ENCODE measurements at regions of chr1 and their contacts with region 1.

Region 1: DNA sequence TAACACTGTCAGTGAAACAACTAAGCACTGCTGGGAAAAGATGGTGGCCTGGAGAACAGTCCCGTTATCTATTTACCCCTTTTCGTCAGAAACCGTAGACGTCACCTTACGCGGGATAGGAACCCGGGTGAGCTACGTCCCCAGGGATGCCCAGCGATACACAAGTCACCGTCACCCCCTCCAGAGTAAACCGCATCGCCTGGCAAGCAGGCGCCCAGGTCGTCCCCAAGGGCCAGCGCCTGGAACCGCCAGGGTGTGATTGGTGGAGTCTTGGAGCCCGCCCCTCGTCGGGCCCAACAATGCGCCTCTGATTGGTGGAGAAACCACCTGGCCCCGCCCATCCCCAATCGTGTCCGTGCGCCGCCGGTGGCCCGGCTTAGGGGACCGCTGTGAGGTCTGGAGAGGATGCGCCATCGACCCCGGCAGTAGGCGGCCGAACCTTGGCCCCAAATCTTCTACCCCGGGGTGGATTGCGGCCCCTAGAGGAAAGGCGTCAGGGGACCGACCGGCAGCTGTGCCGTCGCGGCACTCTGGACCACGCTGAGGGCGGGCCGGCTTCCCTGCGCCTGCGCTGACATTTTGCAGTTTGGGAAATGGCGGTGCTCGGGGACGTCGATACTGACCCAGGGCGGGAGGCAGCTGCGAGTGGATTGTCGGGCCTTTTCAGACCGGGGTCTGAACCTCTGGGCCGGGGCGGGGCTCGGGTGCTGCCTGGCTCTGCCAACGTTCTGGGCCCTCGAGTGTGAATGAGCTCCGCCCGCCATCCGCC is 34.4 kb downstream of the SLC2A1 start:
- DNase-seq: peak; percentile 87 to 94 (median 92)
- H3K4me3 ChIP-seq: peak overlapping the region; percentile 96
- H3K4me3 Mint-ChIP-seq: peak overlapping the region; percentile 83 to 95 (median 89)
- H3K27ac ChIP-seq: peak overlapping the region; percentile 81
- H3K27ac Mint-ChIP-seq: peak overlapping the region; percentile 79 to 98 (median 94)
- H3K4me1 ChIP-seq: peaks cover 22% of the 10 kb centered on the region
- H3K4me1 Mint-ChIP-seq: peaks cover 34 to 39% (median 36%) of the 10 kb centered on the region in 3 donors
- H3K27me3 ChIP-seq: no peaks in the 10 kb centered on the region
- H3K27me3 Mint-ChIP-seq: no peaks in the 10 kb centered on the region

Region 2: DNA sequence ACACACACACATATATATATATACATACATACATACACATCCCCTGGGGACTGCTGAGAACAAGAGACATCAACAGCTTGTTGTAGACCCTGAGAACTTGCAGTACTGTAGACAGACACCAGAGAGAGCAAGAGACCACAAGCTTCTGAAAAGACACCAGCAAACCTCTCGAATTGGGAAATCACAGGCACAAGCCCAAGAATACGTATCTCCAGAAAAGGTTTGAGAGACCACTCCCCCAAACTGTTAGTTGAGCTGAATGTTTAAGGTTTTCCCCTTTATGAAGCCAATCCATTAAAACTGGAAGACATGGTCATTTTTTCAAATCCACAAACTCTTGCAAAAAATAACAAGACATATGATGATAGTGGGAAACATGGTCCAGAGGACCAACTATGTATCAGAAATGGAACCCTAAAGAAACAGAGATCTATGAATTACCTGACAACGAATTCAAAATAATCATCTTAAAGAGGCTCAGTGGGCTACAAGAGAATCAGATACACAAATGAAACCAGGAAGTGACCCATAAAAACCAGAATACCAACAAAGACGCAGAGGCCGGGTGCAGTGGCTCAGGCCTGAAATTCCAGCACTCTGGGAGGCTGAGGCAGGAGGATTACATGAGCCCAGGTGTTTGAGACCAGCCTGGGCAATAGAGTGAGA is 10.7 kb before region 1 on chr1:
- CTCF ChIA-PET with region 1: interaction called, 34 read pairs
- POLR2A ChIA-PET with region 1: interaction called, 3 read pairs
- DNase-seq: peak in 4 of 5 donors; percentile 61 to 71 (median 68)
- H3K4me3 ChIP-seq: no peak overlapping the region
- H3K4me3 Mint-ChIP-seq: no peak overlapping the region
- H3K27ac ChIP-seq: no peak overlapping the region
- H3K27ac Mint-ChIP-seq: no peak overlapping the region
- H3K4me1 ChIP-seq: no peaks in the 10 kb centered on the region
- H3K4me1 Mint-ChIP-seq: peaks cover 0 to 4% (median 3%) of the 10 kb centered on the region in 3 donors
- H3K27me3 ChIP-seq: no peaks in the 10 kb centered on the region
- H3K27me3 Mint-ChIP-seq: peaks cover 7 to 15% of the 10 kb centered on the region in 2 donors

Region 3: DNA sequence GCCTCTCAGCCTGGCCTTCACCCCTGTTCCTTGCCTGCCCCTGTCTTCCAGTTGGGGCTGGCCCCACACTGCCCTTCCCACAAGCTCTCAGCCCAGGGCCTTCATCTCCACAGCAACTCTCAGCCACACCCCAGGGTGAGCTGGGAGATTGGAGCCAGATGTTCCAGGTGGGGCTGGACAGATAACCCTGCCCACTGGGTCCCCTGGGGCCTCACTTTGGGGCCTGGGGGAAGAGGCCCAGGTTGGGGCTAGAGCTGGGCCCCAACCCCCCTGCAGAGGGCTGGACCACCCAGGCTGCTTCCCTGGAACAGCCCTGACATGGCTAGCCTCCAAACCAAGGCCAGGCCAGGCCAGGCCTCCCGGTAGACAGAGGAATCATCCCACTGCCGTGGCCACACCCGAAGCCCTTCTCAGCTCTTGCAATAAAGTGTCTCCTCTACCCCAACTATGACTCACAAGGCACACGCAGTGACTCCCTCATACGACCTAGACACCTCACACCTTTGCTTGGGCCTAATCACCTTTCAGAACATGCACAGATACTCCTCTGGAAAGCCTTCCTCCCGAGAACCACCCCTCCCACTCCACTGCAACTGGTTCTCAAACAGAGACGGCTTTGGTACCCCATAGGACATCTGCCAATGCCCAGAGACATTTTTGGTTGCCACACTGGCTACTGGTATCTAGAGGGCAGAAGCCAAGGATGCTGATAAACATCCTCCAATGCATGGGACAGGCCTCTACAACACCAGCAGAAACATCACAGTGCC is 12.2 kb after region 1 on chr1:
- CTCF ChIA-PET with region 1: interaction called, 26 read pairs
- POLR2A ChIA-PET with region 1: interaction called, 7 read pairs
- DNase-seq: peak in 4 of 5 donors; percentile 38 to 73 (median 48)
- H3K4me3 ChIP-seq: no peak overlapping the region
- H3K4me3 Mint-ChIP-seq: peak overlapping the region; percentile 34 to 65 (median 52)
- H3K27ac ChIP-seq: peak overlapping the region; percentile 62
- H3K27ac Mint-ChIP-seq: peak overlapping the region; percentile 81 to 96 (median 92)
- H3K4me1 ChIP-seq: peaks cover 96% of the 10 kb centered on the region
- H3K4me1 Mint-ChIP-seq: peaks cover 94 to 99% (median 99%) of the 10 kb centered on the region in 3 donors
- H3K27me3 ChIP-seq: no peaks in the 10 kb centered on the region
- H3K27me3 Mint-ChIP-seq: peaks cover 0 to 3% of the 10 kb centered on the region in 2 donors

Region 4: GRCh38 chr1:42952303-42953001 is 28.2 kb after region 1 on chr1:
- CTCF ChIA-PET with region 1: interaction called, 17 read pairs
- POLR2A ChIA-PET with region 1: interaction called, 13 read pairs
- DNase-seq: peak in 1 of 5 donors; percentile 68
- H3K4me3 ChIP-seq: peak overlapping the region; percentile 49
- H3K4me3 Mint-ChIP-seq: peak overlapping the region; percentile 46 to 87 (median 64)
- H3K27ac ChIP-seq: peak overlapping the region; percentile 49
- H3K27ac Mint-ChIP-seq: peak overlapping the region; percentile 40 to 95 (median 90)
- H3K4me1 ChIP-seq: peaks cover 91% of the 10 kb centered on the region
- H3K4me1 Mint-ChIP-seq: peaks cover 81 to 94% (median 90%) of the 10 kb centered on the region in 3 donors
- H3K27me3 ChIP-seq: no peaks in the 10 kb centered on the region
- H3K27me3 Mint-ChIP-seq: no peaks in the 10 kb centered on the region

Region 5: GRCh38 chr1:42958488-42959319 is 34.4 kb after region 1 on chr1 and contains the start of gene SLC2A1:
- CTCF ChIA-PET with region 1: interaction called, 17 read pairs
- POLR2A ChIA-PET with region 1: interaction called, 13 read pairs
- DNase-seq: peak; percentile 92 to 99 (median 94)
- H3K4me3 ChIP-seq: peak within 1 kb of the TSS; percentile 78
- H3K4me3 Mint-ChIP-seq: peak within 1 kb of the TSS; percentile 95 to 100 (median 98)
- H3K27ac ChIP-seq: peak within 1 kb of the TSS; percentile 84
- H3K27ac Mint-ChIP-seq: peak within 1 kb of the TSS; percentile 96 to 99 (median 98)
- H3K4me1 ChIP-seq: peaks cover 43% of the 10 kb centered on the region
- H3K4me1 Mint-ChIP-seq: peaks cover 52 to 59% (median 56%) of the 10 kb centered on the region in 3 donors
- H3K27me3 ChIP-seq: no peaks in the 10 kb centered on the region
- H3K27me3 Mint-ChIP-seq: peaks cover 0 to 2% of the 10 kb centered on the region in 2 donors
- total RNA-seq, gene SLC2A1: 103 to 108 TPM

Region 6: DNA sequence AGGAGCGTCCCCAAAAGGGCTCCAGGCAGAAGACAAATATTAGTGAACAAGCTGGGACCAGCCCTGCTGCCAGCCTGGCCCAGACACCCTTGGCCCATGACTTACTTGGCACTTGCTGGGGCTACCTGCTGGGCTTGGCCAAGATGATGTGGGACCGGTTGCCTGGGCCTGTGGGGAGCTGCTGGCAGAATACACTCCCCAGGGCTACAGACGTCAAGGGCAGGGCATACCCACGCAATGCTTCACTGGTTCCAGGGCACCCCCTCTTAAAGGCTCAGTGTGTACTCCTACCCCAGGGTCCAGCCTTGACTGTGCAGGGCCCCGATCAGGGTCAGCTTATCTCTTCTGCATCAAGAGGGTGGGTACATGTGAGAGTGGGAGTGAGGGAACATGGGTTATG is 140.9 kb after region 1 on chr1:
- CTCF ChIA-PET with region 1: interaction called, 141 read pairs
- POLR2A ChIA-PET with region 1: no interaction called
- DNase-seq: no peak
- H3K4me3 ChIP-seq: no peak overlapping the region
- H3K4me3 Mint-ChIP-seq: no peak overlapping the region
- H3K27ac ChIP-seq: no peak overlapping the region
- H3K27ac Mint-ChIP-seq: peak overlapping the region in 2 of 8 donors; percentile 1 to 11
- H3K4me1 ChIP-seq: peaks cover 5% of the 10 kb centered on the region
- H3K4me1 Mint-ChIP-seq: peaks cover 7 to 18% (median 7%) of the 10 kb centered on the region in 3 donors
- H3K27me3 ChIP-seq: no peaks in the 10 kb centered on the region
- H3K27me3 Mint-ChIP-seq: peaks cover 0 to 1% of the 10 kb centered on the region in 2 donors

Region 7: DNA sequence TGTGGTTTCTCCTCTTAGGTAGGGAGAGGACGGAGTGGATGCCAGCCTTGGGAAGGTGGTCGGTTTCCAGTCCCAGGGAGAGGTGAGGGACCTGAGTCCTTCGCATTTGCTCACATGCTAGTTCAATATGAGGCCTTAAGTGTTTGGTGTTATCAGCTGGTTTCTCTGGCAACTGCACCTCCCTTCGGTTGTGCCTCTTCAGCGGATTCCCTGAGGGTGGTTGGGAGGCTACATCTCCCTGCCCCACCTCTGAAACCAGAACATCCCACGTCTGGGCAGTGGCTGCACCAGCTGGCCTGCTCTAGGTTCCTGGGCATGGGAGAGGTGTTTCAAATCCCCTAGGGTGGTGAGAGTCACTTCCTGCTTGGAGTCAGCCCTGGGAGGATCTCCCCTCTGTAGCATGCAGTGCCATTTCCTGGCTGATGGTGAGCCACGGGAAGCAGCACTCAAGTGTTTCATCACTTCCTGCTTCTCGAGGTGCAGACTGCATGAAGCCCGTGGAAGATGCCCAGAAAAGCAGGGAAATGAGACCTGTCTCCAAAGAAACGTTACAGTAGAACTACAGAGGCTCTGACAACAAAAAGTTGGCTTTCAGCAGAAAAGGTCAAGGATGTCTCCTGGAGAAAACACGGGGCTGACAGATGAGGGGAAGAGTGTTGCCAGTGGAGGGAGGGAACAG is 350.0 kb after region 1 on chr1:
- CTCF ChIA-PET with region 1: no interaction called
- POLR2A ChIA-PET with region 1: no interaction called
- DNase-seq: peak in 1 of 5 donors; percentile 28
- H3K4me3 ChIP-seq: peak overlapping the region; percentile 10
- H3K4me3 Mint-ChIP-seq: peak overlapping the region in 4 of 7 donors; percentile 45 to 74 (median 60)
- H3K27ac ChIP-seq: no peak overlapping the region
- H3K27ac Mint-ChIP-seq: peak overlapping the region in 7 of 8 donors; percentile 24 to 88 (median 53)
- H3K4me1 ChIP-seq: peaks cover 10% of the 10 kb centered on the region
- H3K4me1 Mint-ChIP-seq: peaks cover 16 to 29% (median 25%) of the 10 kb centered on the region in 3 donors
- H3K27me3 ChIP-seq: no peaks in the 10 kb centered on the region
- H3K27me3 Mint-ChIP-seq: peaks cover 13 to 35% of the 10 kb centered on the region in 2 donors